B cell (primary cell): ENCODE measurements at regions of chr2 and their contacts with region 1.

Region 1: DNA sequence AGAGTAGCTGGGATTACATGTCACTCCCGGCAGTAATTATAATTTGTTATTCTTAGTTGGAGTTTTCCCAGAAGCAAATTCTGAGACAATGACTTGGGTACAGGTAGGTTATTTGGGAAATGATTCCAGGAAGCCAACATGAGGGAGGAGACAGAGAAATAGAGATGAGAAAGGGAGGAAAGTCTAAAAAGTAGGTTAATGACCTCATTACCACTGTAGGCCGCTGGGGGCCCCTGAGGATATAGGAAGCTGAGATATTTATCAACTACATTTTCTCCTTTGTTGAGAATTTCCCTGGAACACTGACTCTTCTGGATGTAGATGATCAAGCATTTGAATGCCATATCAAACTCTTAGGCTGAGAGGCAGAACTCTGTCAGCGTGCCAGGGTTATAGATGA is 284.3 kb downstream of the ICOS start:
- DNase-seq: no peak
- ATAC-seq: no peak
- H3K4me3 ChIP-seq: no peak overlapping the region
- H3K4me3 Mint-ChIP-seq: no peak overlapping the region
- H3K27ac ChIP-seq: no peak overlapping the region
- H3K27ac Mint-ChIP-seq: no peak overlapping the region
- H3K4me1 ChIP-seq: no peaks in the 10 kb centered on the region
- H3K4me1 Mint-ChIP-seq: no peaks in the 10 kb centered on the region
- H3K27me3 ChIP-seq: no peaks in the 10 kb centered on the region
- H3K27me3 Mint-ChIP-seq: peaks cover 1% of the 10 kb centered on the region
- CTCF ChIP-seq: no peak

Region 2: DNA sequence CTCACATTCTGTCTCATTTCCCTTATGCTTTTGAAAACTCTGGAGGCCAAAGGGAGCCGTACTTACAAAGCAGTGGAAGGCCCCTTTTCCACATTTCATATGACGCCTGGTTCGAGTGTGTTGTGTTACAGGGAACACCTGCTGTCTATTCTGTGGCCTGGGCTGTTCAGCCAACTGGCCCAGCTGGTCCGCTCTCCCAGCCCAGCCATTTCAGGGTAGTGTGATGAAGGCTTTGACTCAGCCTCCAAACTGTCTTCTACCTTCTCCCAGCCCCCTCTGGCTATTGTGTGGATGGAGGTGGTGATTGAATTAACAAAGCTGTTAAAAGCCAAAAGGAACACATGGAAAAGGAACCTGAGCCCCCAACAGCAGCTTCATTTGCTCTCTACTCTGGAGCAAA is 50.5 kb before region 1 on chr2:
- CTCF ChIA-PET with region 1: no interaction called
- POLR2A ChIA-PET with region 1: no interaction called
- intact Hi-C with region 1: no loop called
- DNase-seq: no peak
- ATAC-seq: no peak
- H3K4me3 ChIP-seq: no peak overlapping the region
- H3K4me3 Mint-ChIP-seq: no peak overlapping the region
- H3K27ac ChIP-seq: no peak overlapping the region
- H3K27ac Mint-ChIP-seq: no peak overlapping the region
- H3K4me1 ChIP-seq: no peaks in the 10 kb centered on the region
- H3K4me1 Mint-ChIP-seq: no peaks in the 10 kb centered on the region
- H3K27me3 ChIP-seq: no peaks in the 10 kb centered on the region
- H3K27me3 Mint-ChIP-seq: no peaks in the 10 kb centered on the region
- CTCF ChIP-seq: no peak

Region 3: GRCh38 chr2:204187229-204188083 is 33.4 kb before region 1 on chr2:
- CTCF ChIA-PET with region 1: no interaction called
- POLR2A ChIA-PET with region 1: no interaction called
- intact Hi-C with region 1: loop called (anchors 1 kb)
- DNase-seq: no peak
- ATAC-seq: no peak
- H3K4me3 ChIP-seq: no peak overlapping the region
- H3K4me3 Mint-ChIP-seq: no peak overlapping the region
- H3K27ac ChIP-seq: no peak overlapping the region
- H3K27ac Mint-ChIP-seq: no peak overlapping the region
- H3K4me1 ChIP-seq: no peaks in the 10 kb centered on the region
- H3K4me1 Mint-ChIP-seq: no peaks in the 10 kb centered on the region
- H3K27me3 ChIP-seq: no peaks in the 10 kb centered on the region
- H3K27me3 Mint-ChIP-seq: peaks cover 17% of the 10 kb centered on the region
- CTCF ChIP-seq: no peak